A673 (cell line): ENCODE measurements at regions of chr3 and their contacts with region 1.

Region 1: DNA sequence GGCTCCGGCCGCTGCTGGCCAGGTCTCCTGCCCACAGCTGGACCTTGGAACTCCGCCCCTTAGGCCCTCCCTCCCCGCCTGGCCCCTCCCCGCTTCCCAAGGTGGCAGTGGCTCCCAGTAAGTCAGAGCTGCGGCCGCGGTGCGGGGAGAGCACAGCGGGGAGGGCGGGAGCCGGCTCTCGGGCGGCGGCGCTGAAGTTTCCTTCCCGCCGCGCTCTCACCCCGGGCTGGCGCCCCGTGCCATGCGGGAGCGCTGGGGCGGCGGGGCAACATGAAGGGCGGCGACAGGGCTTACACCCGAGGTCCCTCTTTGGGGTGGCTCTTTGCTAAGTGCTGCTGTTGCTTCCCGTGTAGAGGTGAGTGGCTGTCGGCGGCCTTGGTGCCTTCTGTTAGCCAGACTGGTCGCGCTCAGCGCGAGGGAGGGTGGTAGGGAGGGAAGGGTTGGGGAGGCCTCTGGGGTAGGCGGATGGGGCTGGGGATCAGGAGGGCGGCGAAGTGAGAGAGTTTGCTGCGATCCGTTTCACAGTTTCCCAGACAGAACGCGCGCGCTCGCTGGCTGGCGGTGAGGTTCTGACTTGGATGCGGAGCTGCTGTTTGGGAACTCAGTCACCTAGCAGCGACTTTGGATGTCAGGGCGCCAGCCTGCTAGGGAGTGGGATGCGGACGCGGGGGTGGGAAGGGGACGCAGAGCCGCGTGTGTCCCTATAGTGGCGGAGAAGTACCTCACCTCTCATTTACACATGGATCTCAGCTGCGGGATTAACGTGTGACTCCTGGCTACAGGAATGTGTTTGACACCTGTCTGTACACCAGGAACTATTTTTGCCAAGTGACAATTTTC is 145.5 kb upstream of the UMPS start:
- DNase-seq: peak; percentile 64
- H3K4me3 ChIP-seq: peak overlapping the region; percentile 66
- H3K27ac ChIP-seq: peak overlapping the region; percentile 61
- H3K4me1 ChIP-seq: peaks cover 24% of the 10 kb centered on the region
- H3K27me3 ChIP-seq: no peaks in the 10 kb centered on the region
- CTCF ChIP-seq: no peak

Region 2: GRCh38 chr3:124529826-124530571 is 54.8 kb before region 1 on chr3:
- CTCF ChIA-PET with region 1: no interaction called
- POLR2A ChIA-PET with region 1: no interaction called
- intact Hi-C with region 1: no loop called
- DNase-seq: peak; percentile 35
- H3K4me3 ChIP-seq: no peak overlapping the region
- H3K27ac ChIP-seq: no peak overlapping the region
- H3K4me1 ChIP-seq: no peaks in the 10 kb centered on the region
- H3K27me3 ChIP-seq: no peaks in the 10 kb centered on the region
- CTCF ChIP-seq: no peak

Region 3: DNA sequence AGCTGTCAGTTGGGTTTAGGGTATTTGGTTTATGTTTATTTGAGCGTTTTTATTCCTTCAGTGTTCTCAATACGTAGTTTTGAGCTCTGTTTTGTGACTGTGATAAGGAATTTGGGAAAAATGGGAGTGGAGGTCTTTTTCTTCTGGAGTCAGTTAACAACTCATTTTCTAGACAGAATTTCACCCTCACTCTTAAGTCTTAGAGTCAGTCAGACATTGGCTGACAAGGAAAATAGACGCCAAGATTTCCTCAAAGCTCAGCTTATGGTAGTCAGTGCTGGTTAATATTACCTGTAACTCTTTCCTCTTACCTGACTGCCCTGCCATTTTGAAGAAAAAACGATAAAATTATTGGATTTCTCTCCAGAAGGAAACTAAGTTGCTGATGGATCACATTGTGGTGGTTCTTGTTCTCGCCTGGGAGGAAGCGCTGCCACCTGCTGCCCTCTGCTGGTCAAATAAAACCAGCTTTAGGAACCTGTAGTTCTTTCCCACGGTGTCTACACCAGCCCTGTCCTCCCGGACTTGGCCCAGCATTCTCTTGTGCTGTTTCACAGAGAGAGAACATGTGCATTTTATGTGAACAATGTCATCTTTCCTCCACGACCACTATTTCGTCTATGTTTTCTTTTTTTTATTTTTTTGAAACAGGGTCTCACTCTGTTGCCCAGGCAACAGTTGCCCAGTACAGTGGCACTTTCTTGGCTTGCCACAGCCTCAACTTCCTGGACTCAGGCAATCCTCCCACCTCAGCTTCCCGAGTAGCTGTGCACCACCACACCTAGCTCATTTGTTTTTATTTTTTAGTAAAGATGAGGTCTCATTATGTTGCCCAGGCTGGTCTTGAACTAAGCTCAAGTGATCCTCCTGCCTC is 104.0 kb after region 1 on chr3:
- CTCF ChIA-PET with region 1: no interaction called
- POLR2A ChIA-PET with region 1: no interaction called
- intact Hi-C with region 1: loop called (anchors 5 kb)
- DNase-seq: peak; percentile 88
- H3K4me3 ChIP-seq: no peak overlapping the region
- H3K27ac ChIP-seq: no peak overlapping the region
- H3K4me1 ChIP-seq: peaks cover 8% of the 10 kb centered on the region
- H3K27me3 ChIP-seq: no peaks in the 10 kb centered on the region
- CTCF ChIP-seq: peak; percentile 92

Region 4: DNA sequence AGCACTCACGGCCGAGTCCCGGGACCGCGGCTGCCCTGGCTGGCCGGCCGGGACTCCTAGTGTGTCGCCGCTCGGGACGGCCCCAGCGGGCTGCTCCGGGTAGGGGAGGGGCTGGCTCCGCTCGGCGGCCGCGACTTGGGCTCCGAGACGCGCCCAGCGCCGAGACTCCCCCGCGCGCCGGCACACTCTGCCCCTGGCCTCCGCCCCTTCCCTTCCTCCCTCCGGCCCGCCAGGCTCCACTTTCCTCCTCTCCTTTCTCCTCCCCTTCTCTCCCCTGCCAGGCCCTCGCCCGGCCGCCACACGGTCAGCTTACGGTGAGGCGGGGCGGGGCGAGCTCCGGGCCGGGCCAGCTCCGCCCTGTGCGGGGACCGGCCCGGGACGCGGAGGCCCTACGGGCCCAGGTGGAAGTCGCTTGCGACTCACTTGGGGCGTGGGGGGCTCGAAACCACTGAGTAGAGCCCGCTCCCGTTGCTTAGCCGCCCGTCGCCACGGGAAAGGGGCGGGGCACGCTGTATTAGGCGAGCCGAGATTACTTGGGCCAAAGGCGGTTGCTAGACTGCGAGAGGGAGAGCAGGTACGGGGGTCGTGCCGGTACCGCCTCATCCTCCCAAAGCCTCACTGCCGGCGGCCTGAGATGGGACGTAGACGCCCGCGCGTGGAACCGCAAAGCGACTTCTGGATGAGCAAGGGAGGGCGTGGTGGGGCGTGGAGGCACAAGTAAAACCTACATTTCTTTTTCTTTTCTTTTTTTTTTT is 302.6 kb after region 1 on chr3 and contains the start of gene ITGB5:
- CTCF ChIA-PET with region 1: no interaction called
- POLR2A ChIA-PET with region 1: no interaction called
- intact Hi-C with region 1: no loop called
- DNase-seq: peak; percentile 82
- H3K4me3 ChIP-seq: peak within 1 kb of the TSS; percentile 85
- H3K27ac ChIP-seq: peak within 1 kb of the TSS; percentile 88
- H3K4me1 ChIP-seq: peaks cover 32% of the 10 kb centered on the region
- H3K27me3 ChIP-seq: no peaks in the 10 kb centered on the region
- CTCF ChIP-seq: no peak
- total RNA-seq, gene ITGB5: 116 and 125 TPM in 2 replicates